ENCODE measurements at regions of chr17 and their contacts with region 1.

Region 1: GRCh38 chr17:36204724-36205500 is 6.0 kb upstream of the CCL4L2 start:
- DNase-seq: no peak
- H3K4me3 ChIP-seq: no peak overlapping the region
- H3K27ac ChIP-seq: no peak overlapping the region
- H3K4me1 ChIP-seq: no peaks in the 10 kb centered on the region
- H3K27me3 ChIP-seq: 0 out of 2 replicates have a peak, but pooled peaks cover 2% of the 10 kb centered on the region

Region 2: GRCh38 chr17:36072431-36073121 is 132.3 kb before region 1 on chr17:
- in situ Hi-C with region 1: no loop called
- DNase-seq: peak; percentile 55
- H3K4me3 ChIP-seq: no peak overlapping the region
- H3K27ac ChIP-seq: no peak overlapping the region
- H3K4me1 ChIP-seq: no peaks in the 10 kb centered on the region
- H3K27me3 ChIP-seq: no peaks in the 10 kb centered on the region

Region 3: DNA sequence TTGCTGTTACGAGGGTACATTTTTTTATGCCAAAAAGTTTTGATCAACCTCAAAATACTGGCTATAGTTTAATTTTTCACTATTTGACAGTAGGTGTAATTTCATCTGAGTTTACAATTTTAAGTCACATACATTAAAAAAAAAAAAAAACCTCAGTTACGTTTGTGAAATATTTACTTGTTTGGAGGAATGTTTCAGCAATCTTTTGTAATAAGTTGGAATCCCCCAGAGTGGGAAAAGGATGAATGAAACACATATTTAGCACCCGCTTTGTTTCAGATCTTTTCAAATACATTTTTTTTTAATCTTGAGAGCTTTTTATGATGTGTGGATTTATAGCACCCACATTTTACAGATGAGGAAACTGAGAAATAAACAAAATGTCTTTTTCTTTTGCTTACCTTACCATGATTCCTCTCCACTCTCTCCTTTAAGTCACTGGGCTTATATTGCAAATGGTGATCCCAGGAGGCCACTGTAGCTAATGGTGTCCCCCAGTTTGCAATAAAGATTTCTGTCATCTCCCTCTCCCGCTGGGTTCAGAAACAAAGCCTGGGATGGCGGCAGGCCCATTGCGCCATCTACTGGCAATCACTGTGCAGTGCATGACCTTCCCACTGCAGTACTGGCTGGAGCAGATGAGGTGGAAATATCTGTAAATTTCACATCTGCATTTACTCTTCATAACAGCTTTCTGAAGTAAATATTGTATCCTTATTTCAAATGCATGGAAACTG is 56.2 kb before region 1 on chr17:
- in situ Hi-C with region 1: loop called (anchors 5 kb)
- DNase-seq: peak; percentile 62
- H3K4me3 ChIP-seq: no peak overlapping the region
- H3K27ac ChIP-seq: no peak overlapping the region
- H3K4me1 ChIP-seq: peaks cover 10% of the 10 kb centered on the region; the same call in 1 of the 2 replicates
- H3K27me3 ChIP-seq: peaks cover 23% of the 10 kb centered on the region

Measured in GM23248 (cell line).